Ovary (tissue), 10 donors: ENCODE measurements at regions of chr19 and their contacts with region 1.

Region 1: GRCh38 chr19:48738557-48739399 is 1.6 kb downstream of the RASIP1 start:
- DNase-seq: peak; percentile 93 to 96 (median 94)
- H3K4me3 ChIP-seq: peak overlapping the region; percentile 44
- H3K27ac ChIP-seq: peak overlapping the region; percentile 35 to 36
- H3K4me1 ChIP-seq: no peaks in the 10 kb centered on the region
- H3K27me3 ChIP-seq: no peaks in the 10 kb centered on the region
- CTCF ChIP-seq: peak; percentile 13 to 74 (median 66)
- EP300 ChIP-seq: no peak
- POLR2A ChIP-seq: peak; percentile 19

Region 2: GRCh38 chr19:48646001-48646721 is 92.6 kb before region 1 on chr19 and contains the start of gene CA11:
- intact Hi-C with region 1: loop called in 1 of 4 experiments (anchors 5 kb)
- DNase-seq: peak; percentile 93 to 95 (median 94)
- H3K4me3 ChIP-seq: peak within 1 kb of the TSS; percentile 56
- H3K27ac ChIP-seq: peak within 1 kb of the TSS; percentile 92 to 97
- H3K4me1 ChIP-seq: peaks cover 4% of the 10 kb centered on the region
- H3K27me3 ChIP-seq: no peaks in the 10 kb centered on the region
- CTCF ChIP-seq: peak; percentile 94 to 95 (median 94)
- EP300 ChIP-seq: no peak
- POLR2A ChIP-seq: peak; percentile 71
- total RNA-seq, gene CA11: 14.9 to 52.5 (median 40.8) TPM

Region 3: GRCh38 chr19:48674921-48675824 is 63.6 kb before region 1 on chr19:
- intact Hi-C with region 1: loop called in 2 of 4 experiments (anchors 2 to 5 kb)
- DNase-seq: peak; percentile 82 to 87 (median 83)
- H3K4me3 ChIP-seq: no peak overlapping the region
- H3K27ac ChIP-seq: no peak overlapping the region
- H3K4me1 ChIP-seq: peaks cover 3% of the 10 kb centered on the region
- H3K27me3 ChIP-seq: no peaks in the 10 kb centered on the region
- CTCF ChIP-seq: peak; percentile 84 to 91 (median 89)
- EP300 ChIP-seq: no peak
- POLR2A ChIP-seq: no peak